HepG2 (cell line): ENCODE measurements at regions of chr1 and their contacts with region 1.

Region 1: GRCh38 chr1:84603941-84604830 is 29.9 kb upstream of the CTBS start:
- DNase-seq: peak; percentile 85
- ATAC-seq: peak; percentile 97
- H3K4me3 ChIP-seq: peak overlapping the region; percentile 5 to 59 (median 45); a peak in 4 of 6 replicates
- H3K27ac ChIP-seq: no peak overlapping the region
- H3K4me1 ChIP-seq: peaks cover 17% of the 10 kb centered on the region; the same call in 1 of the 2 replicates
- H3K27me3 ChIP-seq: peaks cover 0 to 6% of the 10 kb centered on the region in 2 experiments; a peak in 3 of 5 replicates
- CTCF ChIP-seq: peak; percentile 93
- EP300 ChIP-seq: no peak
- POLR2A ChIP-seq: no peak
- RAD21 ChIP-seq: peak; percentile 89

Region 2: GRCh38 chr1:83990749-83991148 is 613.4 kb before region 1 on chr1:
- CTCF ChIA-PET with region 1: no interaction called
- POLR2A ChIA-PET with region 1: no interaction called
- in situ Hi-C with region 1: no loop called
- intact Hi-C with region 1: loop called (anchors 2 kb)
- DNase-seq: no peak
- ATAC-seq: peak; percentile 51; the same call in 2 of the 3 replicates
- H3K4me3 ChIP-seq: no peak overlapping the region
- H3K27ac ChIP-seq: no peak overlapping the region
- H3K4me1 ChIP-seq: no peaks in the 10 kb centered on the region
- H3K27me3 ChIP-seq: no peaks in the 10 kb centered on the region; a peak in 1 of 5 replicates
- CTCF ChIP-seq: no peak
- EP300 ChIP-seq: no peak
- POLR2A ChIP-seq: no peak
- RAD21 ChIP-seq: no peak

Region 3: DNA sequence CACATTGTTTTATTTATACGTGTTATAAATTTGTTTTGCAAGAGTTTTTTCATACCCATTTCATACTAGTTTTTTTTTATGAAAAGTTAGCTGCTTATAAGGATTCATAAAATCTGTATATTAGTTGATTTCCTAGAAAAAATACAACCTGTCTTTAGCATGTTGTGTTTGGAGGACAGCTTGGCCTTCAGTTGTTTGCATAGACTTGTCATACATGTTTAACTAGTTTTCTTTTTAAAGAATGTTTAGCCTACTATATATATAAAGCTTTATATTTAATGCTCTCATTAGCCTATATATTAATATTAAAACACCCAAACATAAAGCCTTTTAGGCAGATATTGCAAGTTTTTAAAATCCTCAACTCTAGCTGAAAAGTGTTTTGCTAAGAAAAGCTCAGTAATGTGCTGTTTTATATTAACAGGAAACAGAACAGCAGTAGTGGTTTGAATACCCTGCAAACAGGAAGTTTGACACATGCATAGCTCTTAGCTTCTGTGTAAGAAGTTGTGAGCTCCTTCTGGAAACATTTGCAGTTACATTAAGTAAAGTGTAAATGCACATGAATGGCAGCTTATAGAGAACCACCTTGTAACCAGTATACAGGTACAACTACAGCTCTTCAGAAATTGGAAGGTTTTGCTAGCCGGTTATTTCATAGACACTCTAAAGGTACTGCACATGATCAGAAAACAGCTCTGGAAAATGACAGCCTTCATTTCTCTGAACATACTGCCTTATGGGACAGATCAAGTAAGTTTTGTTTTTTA is 460.2 kb before region 1 on chr1 and contains the start of gene PRKACB:
- CTCF ChIA-PET with region 1: interaction called, 7 read pairs
- POLR2A ChIA-PET with region 1: no interaction called
- in situ Hi-C with region 1: loop called (anchors 25 kb)
- intact Hi-C with region 1: loop called (anchors 1 kb)
- DNase-seq: no peak
- ATAC-seq: no peak
- H3K4me3 ChIP-seq: no peak within 1 kb of the TSS
- H3K27ac ChIP-seq: no peak within 1 kb of the TSS
- H3K4me1 ChIP-seq: no peaks in the 10 kb centered on the region
- H3K27me3 ChIP-seq: no peaks in the 10 kb centered on the region
- CTCF ChIP-seq: no peak
- EP300 ChIP-seq: no peak
- POLR2A ChIP-seq: no peak
- RAD21 ChIP-seq: no peak
- total RNA-seq, gene PRKACB: 5.8 and 7.7 TPM in 2 replicates

Region 4: DNA sequence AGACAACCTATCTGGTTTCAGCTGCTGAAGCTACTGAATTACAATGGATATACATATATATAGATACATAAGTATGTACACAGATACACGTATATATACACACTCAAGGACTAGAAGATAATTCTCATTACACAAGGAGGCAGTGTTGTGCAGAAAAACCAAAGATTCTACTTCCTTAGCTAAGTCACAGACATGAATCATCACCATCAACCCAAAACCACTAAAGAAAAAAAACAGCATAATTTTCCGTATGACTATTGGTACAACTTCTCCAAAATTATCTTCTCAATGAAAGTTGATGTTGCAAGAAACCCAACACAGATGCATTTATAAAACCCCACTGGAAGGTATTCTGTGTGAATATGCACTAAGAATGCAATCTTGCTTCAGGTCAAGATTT is 161.9 kb before region 1 on chr1:
- CTCF ChIA-PET with region 1: interaction called, 19 read pairs
- POLR2A ChIA-PET with region 1: no interaction called
- in situ Hi-C with region 1: loop called (anchors 5 kb)
- intact Hi-C with region 1: loop called (anchors 1 kb)
- DNase-seq: peak; percentile 30
- ATAC-seq: peak; percentile 73
- H3K4me3 ChIP-seq: no peak overlapping the region
- H3K27ac ChIP-seq: no peak overlapping the region
- H3K4me1 ChIP-seq: no peaks in the 10 kb centered on the region
- H3K27me3 ChIP-seq: no peaks in the 10 kb centered on the region
- CTCF ChIP-seq: peak; percentile 47
- EP300 ChIP-seq: no peak
- POLR2A ChIP-seq: no peak
- RAD21 ChIP-seq: no peak

Region 5: GRCh38 chr1:85438353-85438752 is 834.2 kb after region 1 on chr1:
- CTCF ChIA-PET with region 1: no interaction called
- POLR2A ChIA-PET with region 1: no interaction called
- in situ Hi-C with region 1: no loop called
- intact Hi-C with region 1: no loop called
- DNase-seq: peak; percentile 54
- ATAC-seq: peak; percentile 99
- H3K4me3 ChIP-seq: no peak overlapping the region
- H3K27ac ChIP-seq: peak overlapping the region; percentile 9
- H3K4me1 ChIP-seq: peaks cover 28% of the 10 kb centered on the region
- H3K27me3 ChIP-seq: no peaks in the 10 kb centered on the region
- CTCF ChIP-seq: no peak
- EP300 ChIP-seq: 0 out of 4 replicates have a peak, but pooled peaks of 1 of the 2 experiments have one; percentile 11
- POLR2A ChIP-seq: no peak
- RAD21 ChIP-seq: no peak